ENCODE measurements at regions of chr13 and their contacts with region 1.

Region 1: GRCh38 chr13:30114571-30115256 is 192.6 kb downstream of the KATNAL1 start:
- DNase-seq: peak; percentile 94
- ATAC-seq: peak; percentile 89 to 92
- H3K4me3 ChIP-seq: peak overlapping the region; percentile 56
- H3K27ac ChIP-seq: peak overlapping the region; percentile 76
- H3K4me1 ChIP-seq: peaks cover 33% of the 10 kb centered on the region
- H3K27me3 ChIP-seq: no peaks in the 10 kb centered on the region
- CTCF ChIP-seq: peak; percentile 92

Region 2: DNA sequence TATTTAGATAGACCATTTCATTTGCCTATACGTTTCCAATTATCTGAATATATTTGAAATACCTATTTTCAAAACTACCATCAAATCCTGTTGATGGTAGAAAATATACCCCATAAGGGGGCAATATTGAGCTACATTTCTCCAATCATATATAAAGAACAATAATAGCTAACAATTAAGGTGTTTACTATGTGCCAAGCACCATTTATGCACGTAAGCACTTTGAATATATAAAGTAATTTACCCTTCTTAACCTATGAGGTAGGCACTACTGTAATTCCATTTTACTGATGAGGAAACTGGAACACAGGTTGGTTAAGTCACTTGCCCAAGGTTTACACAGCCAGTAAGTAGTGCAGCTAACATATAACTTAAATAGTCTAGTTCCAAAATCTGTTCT is 343.5 kb before region 1 on chr13:
- intact Hi-C with region 1: loop called (anchors 10 kb)
- DNase-seq: no peak
- ATAC-seq: peak; percentile 19 to 72
- H3K4me3 ChIP-seq: no peak overlapping the region
- H3K27ac ChIP-seq: no peak overlapping the region
- H3K4me1 ChIP-seq: peaks cover 3% of the 10 kb centered on the region
- H3K27me3 ChIP-seq: no peaks in the 10 kb centered on the region
- CTCF ChIP-seq: peak; percentile 47

Measured in lower lobe of right lung (tissue), 2 donors.